Mammary epithelial cell (primary cell): ENCODE measurements at regions of chr1 and their contacts with region 1.

Region 1: GRCh38 chr1:234065794-234066447 is 161.4 kb downstream of the SLC35F3 start:
- DNase-seq: peak; percentile 58
- H3K4me3 ChIP-seq: no peak overlapping the region
- H3K27ac ChIP-seq: peak overlapping the region; percentile 18
- H3K4me1 ChIP-seq: peaks cover 10% of the 10 kb centered on the region
- H3K27me3 ChIP-seq: no peaks in the 10 kb centered on the region
- CTCF ChIP-seq: peak; percentile 76 to 90

Region 2: GRCh38 chr1:233394860-233395717 is 670.8 kb before region 1 on chr1:
- CTCF ChIA-PET with region 1: no interaction called
- dilution Hi-C with region 1: no loop called
- in situ Hi-C with region 1: no loop called
- intact Hi-C with region 1: loop called (anchors 2 kb)
- DNase-seq: peak; percentile 43
- H3K4me3 ChIP-seq: no peak overlapping the region
- H3K27ac ChIP-seq: no peak overlapping the region
- H3K4me1 ChIP-seq: no peaks in the 10 kb centered on the region
- H3K27me3 ChIP-seq: peaks cover 1% of the 10 kb centered on the region
- CTCF ChIP-seq: peak; percentile 83 to 89

Region 3: DNA sequence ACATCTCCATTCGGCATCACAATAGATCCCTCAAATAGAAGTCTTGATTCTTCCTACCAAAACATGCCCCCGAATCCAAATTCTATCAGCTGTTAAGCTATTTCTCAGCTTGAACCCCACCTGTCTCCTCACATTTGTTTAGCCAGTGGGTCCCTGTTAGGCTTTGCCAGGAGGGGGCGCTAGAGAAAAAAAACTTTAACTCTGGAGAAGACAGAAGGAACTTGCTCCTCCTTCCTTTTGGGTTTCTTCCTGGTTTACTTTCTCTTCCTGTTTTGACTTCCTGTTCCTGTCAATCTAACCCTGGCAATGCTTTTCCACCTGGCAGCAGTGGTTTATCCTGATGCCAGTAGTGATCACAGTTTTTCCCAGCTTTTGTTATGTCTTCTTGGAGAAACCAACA is 547.6 kb before region 1 on chr1:
- CTCF ChIA-PET with region 1: no interaction called
- dilution Hi-C with region 1: no loop called
- in situ Hi-C with region 1: no loop called
- intact Hi-C with region 1: loop called (anchors 5 kb)
- DNase-seq: peak; percentile 54
- H3K4me3 ChIP-seq: no peak overlapping the region
- H3K27ac ChIP-seq: no peak overlapping the region
- H3K4me1 ChIP-seq: peaks cover 22% of the 10 kb centered on the region
- H3K27me3 ChIP-seq: peaks cover 2% of the 10 kb centered on the region
- CTCF ChIP-seq: peak; percentile 67 to 74

Region 4: DNA sequence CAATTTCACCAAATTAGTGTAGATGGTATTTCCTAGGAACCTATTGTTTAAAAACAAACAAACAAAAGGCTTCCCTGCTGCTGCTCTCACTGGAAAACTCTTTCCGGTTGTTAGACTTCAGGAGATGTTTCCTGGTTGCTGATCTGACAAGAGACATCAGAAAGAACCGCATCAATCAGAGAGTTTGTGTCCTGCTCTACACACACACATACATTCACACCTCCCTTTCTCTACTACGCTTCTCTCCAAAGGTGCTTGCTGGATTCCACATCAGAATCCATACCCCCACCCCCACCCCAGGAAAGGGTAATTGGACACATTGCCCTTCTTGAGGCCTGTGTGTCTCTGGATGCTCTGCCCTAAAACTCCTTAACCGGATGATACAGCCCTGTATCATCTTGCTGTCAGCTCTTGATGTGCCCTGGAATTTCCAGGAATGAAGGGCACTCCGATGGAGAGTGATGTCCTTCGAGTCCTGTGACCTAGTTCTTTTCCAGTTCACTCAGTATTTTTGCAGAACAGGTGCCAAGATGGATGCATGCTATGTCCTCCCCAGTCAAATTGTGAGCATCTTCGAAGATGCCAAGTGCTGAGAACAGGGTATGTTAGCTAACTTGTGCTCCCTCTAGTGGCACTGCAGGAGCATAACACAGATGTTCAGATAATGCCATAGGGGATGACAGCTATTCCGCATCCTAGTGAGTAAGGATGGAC is 275.1 kb before region 1 on chr1:
- CTCF ChIA-PET with region 1: no interaction called
- dilution Hi-C with region 1: no loop called
- in situ Hi-C with region 1: loop called in 1 of 2 experiments (anchors 25 kb)
- intact Hi-C with region 1: loop called (anchors 1 kb)
- DNase-seq: peak; percentile 57
- H3K4me3 ChIP-seq: no peak overlapping the region
- H3K27ac ChIP-seq: no peak overlapping the region
- H3K4me1 ChIP-seq: no peaks in the 10 kb centered on the region
- H3K27me3 ChIP-seq: peaks cover 2% of the 10 kb centered on the region
- CTCF ChIP-seq: peak; percentile 95 to 97

Region 5: GRCh38 chr1:233993651-233994050 is 72.3 kb before region 1 on chr1:
- CTCF ChIA-PET with region 1: no interaction called
- dilution Hi-C with region 1: no loop called
- in situ Hi-C with region 1: no loop called
- intact Hi-C with region 1: loop called (anchors 5 kb)
- DNase-seq: peak; percentile 98
- H3K4me3 ChIP-seq: no peak overlapping the region
- H3K27ac ChIP-seq: peak overlapping the region; percentile 98
- H3K4me1 ChIP-seq: peaks cover 55% of the 10 kb centered on the region
- H3K27me3 ChIP-seq: no peaks in the 10 kb centered on the region
- CTCF ChIP-seq: no peak

Region 6: GRCh38 chr1:234114648-234115307 is 48.9 kb after region 1 on chr1:
- CTCF ChIA-PET with region 1: no interaction called
- dilution Hi-C with region 1: no loop called
- in situ Hi-C with region 1: no loop called
- intact Hi-C with region 1: no loop called
- DNase-seq: peak; percentile 61
- H3K4me3 ChIP-seq: peak overlapping the region; percentile 28 to 40 (median 33)
- H3K27ac ChIP-seq: peak overlapping the region; percentile 56
- H3K4me1 ChIP-seq: peaks cover 8% of the 10 kb centered on the region
- H3K27me3 ChIP-seq: no peaks in the 10 kb centered on the region
- CTCF ChIP-seq: peak; percentile 67